Common myeloid progenitor, CD34-positive (primary cell): ENCODE measurements at regions of chr11 and their contacts with region 1.

Region 1: GRCh38 chr11:66336234-66337102 is at the start of gene RIN1:
- DNase-seq: peak; percentile 48 to 88 (median 84)
- H3K4me3 ChIP-seq: peak within 1 kb of the TSS in 6 of 7 experiments; percentile 8 to 74 (median 49)
- H3K27ac ChIP-seq: no peak within 1 kb of the TSS
- H3K4me1 ChIP-seq: peaks cover 0 to 22% (median 20%) of the 10 kb centered on the region in 4 experiments
- H3K27me3 ChIP-seq: peaks cover 0 to 2% (median 0%) of the 10 kb centered on the region in 5 experiments

Region 2: GRCh38 chr11:66317723-66318599 is 18.5 kb before region 1 on chr11:
- CTCF ChIA-PET with region 1: interaction called, 86 read pairs
- POLR2A ChIA-PET with region 1: no interaction called
- DNase-seq: peak; percentile 64 to 83 (median 76)
- H3K4me3 ChIP-seq: peak overlapping the region in 5 of 7 experiments; percentile 9 to 65 (median 43)
- H3K27ac ChIP-seq: peak overlapping the region in 1 of 2 experiments; percentile 58
- H3K4me1 ChIP-seq: peaks cover 11 to 46% (median 40%) of the 10 kb centered on the region in 4 experiments
- H3K27me3 ChIP-seq: no peaks in the 10 kb centered on the region

Region 3: DNA sequence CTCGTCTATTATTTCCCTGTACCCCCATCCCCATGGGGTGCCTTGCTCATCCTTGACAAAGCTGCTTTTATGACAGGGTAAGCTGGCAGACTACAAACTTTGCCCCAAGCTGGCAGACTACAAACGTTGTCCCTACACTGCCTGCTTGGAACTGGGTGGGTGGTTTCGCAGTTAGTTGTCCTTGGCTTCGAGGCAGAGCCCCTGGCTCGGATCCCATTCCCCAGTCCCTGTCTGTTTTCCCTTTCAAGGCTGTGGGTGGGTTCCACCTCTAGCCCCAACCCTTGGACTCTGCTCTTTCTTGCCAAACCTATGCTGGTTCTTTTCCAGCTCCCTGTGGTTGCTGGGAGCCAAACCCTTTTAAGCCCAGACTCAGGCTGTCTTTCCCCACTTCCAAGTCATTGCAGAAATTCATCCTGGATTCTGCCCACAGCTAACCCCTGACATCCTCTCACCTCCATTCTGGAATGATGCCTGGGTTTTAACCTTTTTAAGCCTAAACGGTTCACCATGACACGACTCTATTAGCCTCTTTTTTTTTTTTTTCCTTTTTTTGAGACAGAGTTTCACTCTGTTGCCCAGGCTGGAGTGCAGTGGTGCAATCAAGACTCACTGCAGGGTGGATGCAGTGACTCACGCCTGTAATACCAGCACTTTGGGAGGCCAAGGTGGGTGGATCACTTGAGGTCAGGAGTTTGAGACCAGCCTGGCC is 270.8 kb after region 1 on chr11:
- CTCF ChIA-PET with region 1: no interaction called
- POLR2A ChIA-PET with region 1: no interaction called
- DNase-seq: no peak
- H3K4me3 ChIP-seq: no peak overlapping the region
- H3K27ac ChIP-seq: no peak overlapping the region
- H3K4me1 ChIP-seq: peaks cover 5 to 11% (median 7%) of the 10 kb centered on the region in 4 experiments
- H3K27me3 ChIP-seq: no peaks in the 10 kb centered on the region